Motor neuron (in vitro differentiated cells): ENCODE measurements at regions of chr7 and their contacts with region 1.

Region 1: DNA sequence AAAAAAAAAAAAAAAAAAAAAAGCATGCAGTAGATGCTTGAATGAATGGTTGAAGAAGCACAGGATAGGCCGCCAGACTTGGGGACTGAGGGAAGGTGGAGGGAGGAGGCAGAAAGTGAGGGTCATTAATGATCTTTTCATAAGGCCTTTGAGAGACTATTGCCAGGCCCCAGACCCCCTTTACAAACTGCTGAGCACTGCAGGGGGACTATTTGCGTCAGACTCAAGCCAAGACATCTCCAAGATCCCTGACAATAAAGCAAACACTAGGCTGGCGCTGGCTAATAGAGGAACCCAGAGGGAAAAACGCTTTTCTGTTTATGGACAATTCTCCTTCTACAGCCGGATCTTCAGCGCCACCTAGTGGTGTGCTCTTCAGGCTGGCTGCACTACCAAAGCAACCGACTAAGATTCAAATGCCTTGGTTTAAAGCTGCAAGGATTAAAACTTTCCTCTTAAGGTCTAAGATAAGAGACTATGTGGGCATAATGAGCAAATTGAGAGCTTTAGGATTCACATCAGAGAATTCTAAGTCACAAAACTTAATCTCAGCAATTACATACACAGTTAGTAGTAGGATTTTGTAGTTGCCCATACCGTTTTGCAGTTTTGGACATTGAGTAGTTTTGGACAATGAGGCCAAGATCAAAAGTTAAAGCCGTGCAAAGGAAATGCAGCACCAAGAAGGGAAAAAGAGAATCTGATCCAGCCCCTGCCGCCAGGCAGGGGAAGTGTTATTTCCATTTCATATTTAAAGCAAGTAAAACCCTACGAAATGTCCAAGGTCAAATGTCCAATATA is 17.9 kb upstream of the AGK start:
- ATAC-seq: peak; percentile 87 to 99 (median 96)
- H3K4me3 ChIP-seq: peak overlapping the region in 4 of 5 donors; percentile 4 to 18 (median 8)
- H3K27ac ChIP-seq: no peak overlapping the region
- H3K4me1 ChIP-seq: peaks cover 2% of the 10 kb centered on the region in 2 donors

Region 2: GRCh38 chr7:141014524-141015395 is 518.6 kb before region 1 on chr7 and contains the start of gene MRPS33:
- in situ Hi-C with region 1: loop called in 1 of 9 experiments (anchors 25 kb)
- ATAC-seq: peak; percentile 94 to 99 (median 98)
- H3K4me3 ChIP-seq: peak within 1 kb of the TSS; percentile 52 to 67 (median 62)
- H3K27ac ChIP-seq: peak within 1 kb of the TSS; percentile 70 to 76
- H3K4me1 ChIP-seq: peaks cover 4 to 10% of the 10 kb centered on the region in 2 donors
- total RNA-seq, gene MRPS33: 69.1 to 182 (median 76.6) TPM

Region 3: DNA sequence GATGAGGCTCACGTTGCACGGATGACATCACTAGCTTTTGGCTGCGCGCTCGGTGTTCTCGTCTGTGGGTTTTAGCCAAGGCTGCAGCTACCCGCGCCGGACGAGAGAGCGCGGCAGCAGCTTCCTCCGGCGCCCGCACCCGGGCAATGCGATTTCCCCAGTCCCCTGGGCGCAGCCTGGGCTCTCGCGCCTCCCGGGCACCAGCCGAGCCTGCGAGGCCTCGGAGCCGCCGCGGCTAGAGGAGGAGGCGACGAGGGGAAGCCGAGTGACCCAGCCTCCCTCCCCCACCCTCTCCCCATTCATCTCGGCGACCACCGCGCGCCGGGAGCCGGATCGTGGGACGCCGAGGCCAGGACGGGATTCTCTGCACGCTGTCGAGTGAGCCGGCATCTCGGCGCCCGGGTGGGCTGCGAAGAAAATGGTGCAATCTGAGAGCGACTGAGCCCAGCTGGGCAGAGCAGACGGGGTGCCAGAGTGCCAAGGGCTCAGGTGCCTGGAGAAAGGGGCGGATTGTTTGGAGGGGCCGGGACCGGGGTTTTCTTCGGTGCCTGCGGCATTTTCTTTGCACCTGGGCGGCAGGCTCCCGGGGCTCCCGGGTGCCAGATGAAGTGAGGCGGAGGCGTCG is 460.7 kb before region 1 on chr7:
- in situ Hi-C with region 1: loop called in 2 of 9 experiments (anchors 25 kb)
- ATAC-seq: peak; percentile 60 to 74 (median 66)
- H3K4me3 ChIP-seq: peak overlapping the region; percentile 49 to 86 (median 71)
- H3K27ac ChIP-seq: peak overlapping the region; percentile 77 to 92
- H3K4me1 ChIP-seq: peaks cover 12 to 15% of the 10 kb centered on the region in 2 donors

Region 4: GRCh38 chr7:141649865-141650634 is 116.7 kb after region 1 on chr7:
- in situ Hi-C with region 1: loop called in 1 of 9 experiments (anchors 25 kb)
- ATAC-seq: peak; percentile 93 to 98 (median 95)
- H3K4me3 ChIP-seq: no peak overlapping the region
- H3K27ac ChIP-seq: peak overlapping the region in 1 of 2 donors; percentile 53
- H3K4me1 ChIP-seq: peaks cover 14 to 18% of the 10 kb centered on the region in 2 donors

Region 5: GRCh38 chr7:141941075-141941474 is 407.7 kb after region 1 on chr7:
- in situ Hi-C with region 1: no loop called
- ATAC-seq: no peak
- H3K4me3 ChIP-seq: no peak overlapping the region
- H3K27ac ChIP-seq: no peak overlapping the region
- H3K4me1 ChIP-seq: no peaks in the 10 kb centered on the region